CD4-positive, alpha-beta T cell (primary cell): ENCODE measurements at regions of chr7 and their contacts with region 1.

Region 1: GRCh38 chr7:44885394-44886317 is at the start of gene PURB:
- DNase-seq: peak; percentile 93 to 100 (median 96)
- ATAC-seq: peak; percentile 88
- H3K4me3 ChIP-seq: peak within 1 kb of the TSS; percentile 68
- H3K4me3 Mint-ChIP-seq: peak within 1 kb of the TSS; percentile 87
- H3K27ac ChIP-seq: peak within 1 kb of the TSS; percentile 96 to 97
- H3K27ac Mint-ChIP-seq: peak within 1 kb of the TSS; percentile 100
- H3K4me1 ChIP-seq: peaks cover 32% of the 10 kb centered on the region
- H3K4me1 Mint-ChIP-seq: peaks cover 43% of the 10 kb centered on the region
- H3K27me3 ChIP-seq: no peaks in the 10 kb centered on the region
- H3K27me3 Mint-ChIP-seq: no peaks in the 10 kb centered on the region
- CTCF ChIP-seq: no peak
- total RNA-seq, gene PURB: 17.0 to 17.4 TPM

Region 2: DNA sequence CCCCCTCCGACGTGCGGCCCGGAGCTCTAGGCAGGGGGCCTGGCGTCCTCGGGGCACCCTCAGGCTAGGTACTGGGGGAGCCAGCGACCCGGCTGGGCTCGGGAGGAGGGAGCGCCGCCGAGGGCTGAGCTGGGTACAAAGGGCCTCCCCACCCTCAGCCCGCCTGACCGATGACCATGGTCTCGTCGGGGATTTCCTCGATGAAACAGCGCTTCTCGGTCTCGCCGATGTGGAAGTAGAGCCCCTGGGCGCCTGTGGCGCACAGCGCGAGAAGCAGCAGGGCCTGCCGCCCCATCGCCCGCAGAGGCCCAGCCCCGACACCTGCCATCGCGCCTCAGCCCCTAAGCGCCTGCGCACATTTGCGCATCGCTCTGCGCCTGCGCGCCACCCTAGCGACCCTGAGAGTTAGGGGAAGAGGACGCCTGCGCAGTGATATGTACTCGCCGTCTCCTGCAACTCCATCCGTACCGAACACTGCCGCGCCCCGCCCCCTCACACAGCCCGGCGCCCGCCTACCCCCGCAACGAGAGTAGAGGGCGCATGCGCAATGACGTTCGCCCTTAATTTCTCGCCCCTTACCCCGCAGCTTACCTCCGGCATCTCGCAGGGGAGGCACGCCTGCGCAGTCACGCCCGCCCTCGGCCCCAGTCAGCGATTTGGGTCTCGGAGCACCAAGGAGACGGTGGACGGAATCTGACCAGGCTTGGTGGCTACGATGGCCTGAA is 303.6 kb before region 1 on chr7 and contains the start of gene TMED4:
- CTCF ChIA-PET with region 1: interaction called, 3 read pairs
- POLR2A ChIA-PET with region 1: interaction called, 29 read pairs
- intact Hi-C with region 1: no loop called
- DNase-seq: peak; percentile 100
- ATAC-seq: peak; percentile 86
- H3K4me3 ChIP-seq: peak within 1 kb of the TSS; percentile 87
- H3K4me3 Mint-ChIP-seq: peak within 1 kb of the TSS; percentile 95
- H3K27ac ChIP-seq: peak within 1 kb of the TSS; percentile 96
- H3K27ac Mint-ChIP-seq: peak within 1 kb of the TSS; percentile 97
- H3K4me1 ChIP-seq: peaks cover 32% of the 10 kb centered on the region
- H3K4me1 Mint-ChIP-seq: peaks cover 39% of the 10 kb centered on the region
- H3K27me3 ChIP-seq: no peaks in the 10 kb centered on the region
- H3K27me3 Mint-ChIP-seq: no peaks in the 10 kb centered on the region
- CTCF ChIP-seq: no peak
- total RNA-seq, gene TMED4: 134 to 138 TPM

Region 3: GRCh38 chr7:44797329-44798251 is 88.1 kb before region 1 on chr7:
- CTCF ChIA-PET with region 1: no interaction called
- POLR2A ChIA-PET with region 1: interaction called, 21 read pairs
- intact Hi-C with region 1: loop called (anchors 2 kb)
- DNase-seq: peak; percentile 65 to 94 (median 80)
- ATAC-seq: peak; percentile 57
- H3K4me3 ChIP-seq: peak overlapping the region; percentile 65
- H3K4me3 Mint-ChIP-seq: peak overlapping the region; percentile 91
- H3K27ac ChIP-seq: peak overlapping the region; percentile 92 to 97
- H3K27ac Mint-ChIP-seq: peak overlapping the region; percentile 93
- H3K4me1 ChIP-seq: peaks cover 29% of the 10 kb centered on the region
- H3K4me1 Mint-ChIP-seq: peaks cover 40% of the 10 kb centered on the region
- H3K27me3 ChIP-seq: no peaks in the 10 kb centered on the region
- H3K27me3 Mint-ChIP-seq: no peaks in the 10 kb centered on the region
- CTCF ChIP-seq: peak; percentile 56

Region 4: DNA sequence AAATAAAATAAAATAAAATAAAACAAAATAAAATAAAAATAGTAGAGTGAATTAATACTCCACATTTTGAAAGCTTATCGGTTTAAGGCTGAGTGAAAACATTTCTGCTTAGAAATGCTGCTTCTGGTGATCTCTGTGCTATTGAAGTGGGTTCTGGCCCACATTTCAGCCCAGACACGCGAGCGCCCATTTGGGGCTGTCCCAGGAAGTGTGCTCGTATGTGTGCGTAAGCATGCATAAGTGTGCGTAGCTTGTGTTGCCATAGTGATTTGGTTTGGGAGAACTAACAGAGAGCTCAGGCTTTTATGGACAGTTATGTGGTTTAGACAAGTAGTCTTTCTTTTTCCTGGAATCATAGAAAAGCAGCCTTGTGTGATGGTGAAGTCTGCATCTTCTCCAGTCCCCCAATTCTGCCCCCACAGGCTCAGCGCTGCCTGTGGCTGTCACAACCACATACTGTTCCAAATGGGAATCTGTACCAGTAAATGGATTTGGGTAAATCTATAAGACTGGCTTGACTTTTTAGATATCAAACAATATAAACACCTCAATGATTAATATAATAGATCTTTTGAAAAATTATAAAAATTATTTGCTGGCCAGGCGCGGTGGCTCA is 29.4 kb after region 1 on chr7:
- CTCF ChIA-PET with region 1: interaction called, 3 read pairs
- POLR2A ChIA-PET with region 1: interaction called, 21 read pairs
- intact Hi-C with region 1: loop called (anchors 1 to 2 kb)
- DNase-seq: peak; percentile 17 to 90 (median 52)
- ATAC-seq: peak; percentile 91
- H3K4me3 ChIP-seq: no peak overlapping the region
- H3K4me3 Mint-ChIP-seq: peak overlapping the region; percentile 47
- H3K27ac ChIP-seq: peak overlapping the region in 1 of 2 donors; percentile 38
- H3K27ac Mint-ChIP-seq: peak overlapping the region; percentile 75
- H3K4me1 ChIP-seq: no peaks in the 10 kb centered on the region
- H3K4me1 Mint-ChIP-seq: peaks cover 6% of the 10 kb centered on the region
- H3K27me3 ChIP-seq: no peaks in the 10 kb centered on the region
- H3K27me3 Mint-ChIP-seq: no peaks in the 10 kb centered on the region
- CTCF ChIP-seq: no peak

Region 5: GRCh38 chr7:44999245-45000095 is 113.8 kb after region 1 on chr7:
- CTCF ChIA-PET with region 1: no interaction called
- POLR2A ChIA-PET with region 1: interaction called, 12 read pairs
- intact Hi-C with region 1: loop called in 1 of 2 experiments (anchors 5 kb)
- DNase-seq: peak; percentile 98 to 100 (median 99)
- ATAC-seq: peak; percentile 79
- H3K4me3 ChIP-seq: peak overlapping the region; percentile 69
- H3K4me3 Mint-ChIP-seq: peak overlapping the region; percentile 99
- H3K27ac ChIP-seq: peak overlapping the region; percentile 76 to 78
- H3K27ac Mint-ChIP-seq: peak overlapping the region; percentile 99
- H3K4me1 ChIP-seq: peaks cover 58% of the 10 kb centered on the region
- H3K4me1 Mint-ChIP-seq: peaks cover 52% of the 10 kb centered on the region
- H3K27me3 ChIP-seq: no peaks in the 10 kb centered on the region
- H3K27me3 Mint-ChIP-seq: no peaks in the 10 kb centered on the region
- CTCF ChIP-seq: no peak